HCT116 (cell line): ENCODE measurements at regions of chr12 and their contacts with region 1.

Region 1: GRCh38 chr12:93378373-93379325 is 924 bp downstream of the NUDT4 start:
- DNase-seq: no peak
- ATAC-seq: peak; percentile 26
- H3K4me3 ChIP-seq: peak overlapping the region; percentile 86 to 88
- H3K27ac ChIP-seq: peak overlapping the region; percentile 68
- H3K4me1 ChIP-seq: peaks cover 17 to 32% of the 10 kb centered on the region in 2 experiments
- H3K27me3 ChIP-seq: no peaks in the 10 kb centered on the region
- CTCF ChIP-seq: no peak
- POLR2A ChIP-seq: no peak
- RAD21 ChIP-seq: no peak

Region 2: GRCh38 chr12:93025145-93025805 is 353.4 kb before region 1 on chr12:
- CTCF ChIA-PET with region 1: no interaction called
- POLR2A ChIA-PET with region 1: no interaction called
- RAD21 ChIA-PET with region 1: no interaction called
- intact Hi-C with region 1: loop called (anchors 5 kb)
- DNase-seq: peak; percentile 45
- ATAC-seq: peak; percentile 82
- H3K4me3 ChIP-seq: no peak overlapping the region
- H3K27ac ChIP-seq: no peak overlapping the region
- H3K4me1 ChIP-seq: peaks cover 0 to 6% of the 10 kb centered on the region in 2 experiments; a peak in 3 of 4 replicates
- H3K27me3 ChIP-seq: no peaks in the 10 kb centered on the region
- CTCF ChIP-seq: peak; percentile 49 to 64 (median 54); a peak in 5 of 6 replicates
- POLR2A ChIP-seq: no peak
- RAD21 ChIP-seq: peak; percentile 81

Region 3: GRCh38 chr12:93109551-93110203 is 269.0 kb before region 1 on chr12:
- CTCF ChIA-PET with region 1: no interaction called
- POLR2A ChIA-PET with region 1: no interaction called
- RAD21 ChIA-PET with region 1: no interaction called
- intact Hi-C with region 1: no loop called
- DNase-seq: no peak
- ATAC-seq: no peak
- H3K4me3 ChIP-seq: no peak overlapping the region
- H3K27ac ChIP-seq: no peak overlapping the region
- H3K4me1 ChIP-seq: no peaks in the 10 kb centered on the region
- H3K27me3 ChIP-seq: no peaks in the 10 kb centered on the region
- CTCF ChIP-seq: no peak
- POLR2A ChIP-seq: no peak
- RAD21 ChIP-seq: no peak